B cell (primary cell): ENCODE measurements at regions of chr20 and their contacts with region 1.

Region 1: GRCh38 chr20:13458860-13459451 is 179.8 kb downstream of the TASP1 start:
- DNase-seq: peak; percentile 30
- ATAC-seq: peak; percentile 39
- H3K4me3 ChIP-seq: no peak overlapping the region
- H3K4me3 Mint-ChIP-seq: no peak overlapping the region
- H3K27ac ChIP-seq: no peak overlapping the region
- H3K27ac Mint-ChIP-seq: no peak overlapping the region
- H3K4me1 ChIP-seq: no peaks in the 10 kb centered on the region
- H3K4me1 Mint-ChIP-seq: no peaks in the 10 kb centered on the region
- H3K27me3 ChIP-seq: no peaks in the 10 kb centered on the region
- H3K27me3 Mint-ChIP-seq: no peaks in the 10 kb centered on the region
- CTCF ChIP-seq: peak; percentile 81

Region 2: DNA sequence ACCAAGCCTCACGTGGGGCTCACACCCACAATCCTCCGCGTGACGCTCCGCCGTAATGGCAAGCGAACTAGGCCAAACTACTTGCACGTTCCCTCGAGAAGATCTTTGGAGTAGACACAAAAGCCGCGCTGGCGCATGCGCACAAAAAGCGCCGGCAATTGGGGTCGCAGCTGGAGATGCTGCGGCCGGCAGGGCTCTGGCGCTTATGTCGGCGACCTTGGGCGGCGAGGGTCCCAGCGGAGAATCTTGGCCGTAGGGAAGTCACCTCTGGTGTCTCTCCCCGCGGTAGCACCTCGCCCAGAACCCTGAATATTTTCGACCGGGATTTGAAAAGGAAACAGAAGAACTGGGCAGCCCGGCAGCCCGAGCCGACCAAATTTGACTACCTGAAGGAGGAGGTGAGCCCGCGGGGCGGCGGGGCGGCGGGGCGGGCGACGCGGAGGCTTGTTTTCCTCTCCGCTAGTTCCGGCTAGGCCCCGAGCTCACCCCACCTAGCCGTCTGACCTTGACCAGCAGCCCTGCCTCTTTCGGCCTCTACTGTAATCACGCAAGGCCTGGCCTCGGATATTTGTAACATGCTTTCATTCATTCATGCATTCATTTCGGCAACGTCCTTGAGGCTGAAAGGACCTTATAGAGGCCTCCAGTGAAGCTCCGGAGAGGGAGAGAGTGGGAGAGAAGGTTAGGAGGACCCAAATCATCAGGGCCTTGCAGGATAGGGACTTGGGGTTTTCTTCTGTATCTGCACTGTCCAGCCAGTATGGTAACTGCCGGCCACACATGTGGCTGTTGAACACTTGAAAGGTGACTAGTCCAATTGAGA is 326.1 kb after region 1 on chr20 and contains the starts of genes ESF1 and NDUFAF5:
- CTCF ChIA-PET with region 1: interaction called, 3 read pairs
- POLR2A ChIA-PET with region 1: no interaction called
- intact Hi-C with region 1: loop called (anchors 2 kb)
- DNase-seq: peak; percentile 95
- ATAC-seq: peak; percentile 98
- H3K4me3 ChIP-seq: peak within 1 kb of the TSS; percentile 68 to 91 (median 85)
- H3K4me3 Mint-ChIP-seq: peak within 1 kb of the TSS; percentile 98
- H3K27ac ChIP-seq: peak within 1 kb of the TSS; percentile 85 to 91
- H3K27ac Mint-ChIP-seq: peak within 1 kb of the TSS; percentile 96
- H3K4me1 ChIP-seq: peaks cover 19 to 23% of the 10 kb centered on the region in 2 donors
- H3K4me1 Mint-ChIP-seq: peaks cover 49% of the 10 kb centered on the region
- H3K27me3 ChIP-seq: no peaks in the 10 kb centered on the region
- H3K27me3 Mint-ChIP-seq: no peaks in the 10 kb centered on the region
- CTCF ChIP-seq: no peak
- total RNA-seq, gene ESF1: 13.8 and 13.9 TPM in 2 replicates
- total RNA-seq, gene NDUFAF5: 28.8 and 32.3 TPM in 2 replicates